A549 (cell line): ENCODE measurements at regions of chr3 and their contacts with region 1.

Region 1: DNA sequence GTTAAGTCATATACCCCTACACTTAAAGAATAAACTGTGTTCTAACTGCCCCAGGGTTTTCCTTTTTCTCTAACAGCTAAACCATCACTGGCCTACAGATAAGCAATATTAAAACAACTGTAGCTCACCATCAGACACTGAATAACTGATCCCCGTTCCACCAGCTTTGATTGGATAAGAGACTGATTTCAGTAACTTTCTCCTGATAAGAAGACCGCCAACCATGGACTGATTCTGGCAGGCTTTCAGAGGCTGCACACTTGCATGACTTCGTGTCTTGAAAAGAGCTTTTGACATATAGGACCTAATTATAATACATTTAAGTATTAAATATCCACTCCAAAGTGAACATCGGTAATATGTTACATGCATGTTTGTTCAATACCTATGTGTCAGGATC is 15.3 kb upstream of the CEP97 start:
- DNase-seq: no peak
- ATAC-seq: no peak
- H3K4me3 ChIP-seq: no peak overlapping the region
- H3K27ac ChIP-seq: no peak overlapping the region
- H3K4me1 ChIP-seq: no peaks in the 10 kb centered on the region
- CTCF ChIP-seq: no peak
- EP300 ChIP-seq: no peak
- POLR2A ChIP-seq: no peak
- RAD21 ChIP-seq: no peak

Region 2: GRCh38 chr3:101676765-101677435 is 32.2 kb before region 1 on chr3 and contains the start of gene ZBTB11:
- CTCF ChIA-PET with region 1: interaction called, 24 read pairs
- POLR2A ChIA-PET with region 1: interaction called, 3 read pairs
- DNase-seq: peak; percentile 97 to 100
- ATAC-seq: peak; percentile 75 to 86
- H3K4me3 ChIP-seq: peak within 1 kb of the TSS; percentile 95
- H3K27ac ChIP-seq: peak within 1 kb of the TSS; percentile 90 to 92
- H3K4me1 ChIP-seq: peaks cover 22% of the 10 kb centered on the region
- CTCF ChIP-seq: peak; percentile 37; the same call in 2 of the 3 replicates
- EP300 ChIP-seq: no peak
- POLR2A ChIP-seq: peak; percentile 60
- RAD21 ChIP-seq: peak in 1 of 2 experiments; percentile 25; a peak in 3 of 5 replicates
- polyA plus RNA-seq, gene ZBTB11: 18.8 and 24.3 TPM in 2 replicates